ENCODE measurements at regions of chr5 and their contacts with region 1.

Region 1: DNA sequence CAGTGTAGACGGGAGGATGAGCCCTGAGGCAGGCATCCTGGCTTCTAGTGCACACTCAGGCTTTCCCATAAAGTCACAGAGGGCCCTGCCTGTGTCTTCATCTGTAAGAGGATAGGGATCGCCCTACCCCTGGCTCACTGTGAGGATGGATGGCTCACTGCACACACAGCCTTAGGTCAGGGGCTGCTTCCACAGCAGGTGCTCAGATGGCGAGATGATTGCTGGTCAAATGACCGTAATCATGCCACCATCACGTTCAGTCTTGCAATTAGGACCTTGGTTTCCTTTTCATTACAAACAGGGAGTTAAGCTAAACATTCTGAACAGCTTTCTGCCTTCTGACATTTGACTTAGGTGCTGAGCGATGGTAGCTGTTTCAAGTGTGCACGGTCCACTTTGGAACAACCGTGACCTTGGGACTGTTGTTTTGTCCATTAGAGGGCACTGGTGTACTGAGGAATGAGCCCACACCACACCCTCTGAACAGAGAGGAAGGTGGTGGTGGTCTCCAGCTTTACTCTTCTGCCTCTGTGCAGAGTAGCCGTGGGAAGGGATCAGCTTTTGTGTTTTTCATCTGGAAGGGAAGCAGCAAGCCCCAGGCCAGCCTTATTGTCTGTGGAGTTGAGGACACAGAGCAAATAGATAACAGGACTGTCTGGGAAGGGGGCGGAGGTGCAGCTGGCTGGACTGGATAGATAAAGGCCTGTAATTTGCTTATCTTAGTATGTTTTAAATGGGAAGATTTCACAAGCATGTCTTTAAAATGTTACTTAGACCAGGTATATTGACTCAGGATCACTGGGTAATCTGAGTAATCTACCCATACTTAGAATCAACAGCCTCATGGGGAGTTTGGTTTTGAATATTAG is 183.1 kb downstream of the TRIO start:
- DNase-seq: no peak
- ATAC-seq: peak; percentile 88
- H3K4me3 Mint-ChIP-seq: no peak overlapping the region
- H3K27ac Mint-ChIP-seq: peak overlapping the region; percentile 43; the same call in 1 of the 2 replicates
- H3K4me1 Mint-ChIP-seq: peaks cover 20% of the 10 kb centered on the region
- H3K27me3 Mint-ChIP-seq: no peaks in the 10 kb centered on the region
- CTCF ChIP-seq: no peak; the same call in 1 of the 2 replicates

Region 2: DNA sequence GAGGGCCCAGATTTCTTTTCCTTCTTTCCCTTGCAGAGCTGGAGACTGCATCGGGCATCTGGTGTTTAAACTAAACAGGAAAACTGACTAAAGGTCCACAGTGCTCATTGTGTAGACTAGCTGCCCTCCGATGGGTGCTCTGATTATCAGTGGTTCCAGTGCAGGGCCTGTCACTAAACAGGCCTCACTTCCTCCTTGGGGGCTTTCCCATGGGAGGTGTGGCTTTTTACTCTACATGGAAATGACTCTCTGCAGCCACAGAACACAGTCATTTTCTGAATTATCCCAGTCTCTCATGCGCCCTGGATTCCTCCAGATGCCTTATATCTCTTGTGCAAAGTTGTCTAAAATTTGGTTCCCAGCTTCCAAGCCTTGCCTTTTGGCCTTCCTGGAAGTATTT is 16.0 kb after region 1 on chr5:
- CTCF ChIA-PET with region 1: interaction called, 13 read pairs
- POLR2A ChIA-PET with region 1: no interaction called
- DNase-seq: no peak
- ATAC-seq: peak; percentile 27
- H3K4me3 Mint-ChIP-seq: no peak overlapping the region
- H3K27ac Mint-ChIP-seq: peak overlapping the region; percentile 72
- H3K4me1 Mint-ChIP-seq: peaks cover 36% of the 10 kb centered on the region
- H3K27me3 Mint-ChIP-seq: no peaks in the 10 kb centered on the region
- CTCF ChIP-seq: no peak

Region 3: GRCh38 chr5:14351845-14352712 is 25.8 kb after region 1 on chr5:
- CTCF ChIA-PET with region 1: interaction called, 11 read pairs
- POLR2A ChIA-PET with region 1: no interaction called
- DNase-seq: peak; percentile 64
- ATAC-seq: peak; percentile 93
- H3K4me3 Mint-ChIP-seq: no peak overlapping the region
- H3K27ac Mint-ChIP-seq: no peak overlapping the region
- H3K4me1 Mint-ChIP-seq: peaks cover 29% of the 10 kb centered on the region
- H3K27me3 Mint-ChIP-seq: no peaks in the 10 kb centered on the region
- CTCF ChIP-seq: peak; percentile 93

Region 4: DNA sequence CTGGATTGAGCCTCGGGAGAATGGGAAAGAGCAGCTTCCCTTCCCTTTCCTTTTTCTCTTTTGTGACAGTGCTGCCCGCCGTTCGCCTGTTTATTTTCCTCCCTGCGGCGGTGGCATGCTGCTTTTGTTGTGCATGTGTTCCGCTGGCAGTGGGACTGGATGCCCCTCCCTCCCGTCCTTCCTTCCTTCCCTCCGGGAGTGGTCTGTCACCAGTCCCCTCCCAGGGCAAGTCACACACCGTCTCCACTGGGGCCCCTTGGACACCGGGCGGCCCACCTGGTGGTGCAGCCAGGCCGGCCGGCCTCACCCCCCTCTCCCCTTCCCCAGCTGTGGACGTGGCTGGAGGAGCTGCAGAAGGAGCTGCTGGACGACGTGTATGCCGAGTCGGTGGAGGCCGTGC is 31.6 kb after region 1 on chr5:
- CTCF ChIA-PET with region 1: interaction called, 11 read pairs
- POLR2A ChIA-PET with region 1: no interaction called
- DNase-seq: peak; percentile 70
- ATAC-seq: peak; percentile 86
- H3K4me3 Mint-ChIP-seq: peak overlapping the region; percentile 54
- H3K27ac Mint-ChIP-seq: peak overlapping the region; percentile 23; the same call in 1 of the 2 replicates
- H3K4me1 Mint-ChIP-seq: peaks cover 33% of the 10 kb centered on the region
- H3K27me3 Mint-ChIP-seq: no peaks in the 10 kb centered on the region
- CTCF ChIP-seq: no peak

Region 5: GRCh38 chr5:14364576-14365472 is 38.6 kb after region 1 on chr5:
- CTCF ChIA-PET with region 1: interaction called, 14 read pairs
- POLR2A ChIA-PET with region 1: no interaction called
- DNase-seq: peak; percentile 84
- ATAC-seq: peak; percentile 91
- H3K4me3 Mint-ChIP-seq: no peak overlapping the region
- H3K27ac Mint-ChIP-seq: 0 out of 2 replicates have a peak overlapping the region, but pooled peaks have one; percentile 30
- H3K4me1 Mint-ChIP-seq: peaks cover 10% of the 10 kb centered on the region
- H3K27me3 Mint-ChIP-seq: no peaks in the 10 kb centered on the region
- CTCF ChIP-seq: peak; percentile 71; the same call in 1 of the 2 replicates

Measured in WTC11 (cell line).